Psoas muscle (tissue), 8 donors: ENCODE measurements at regions of chr2 and their contacts with region 1.

Region 1: DNA sequence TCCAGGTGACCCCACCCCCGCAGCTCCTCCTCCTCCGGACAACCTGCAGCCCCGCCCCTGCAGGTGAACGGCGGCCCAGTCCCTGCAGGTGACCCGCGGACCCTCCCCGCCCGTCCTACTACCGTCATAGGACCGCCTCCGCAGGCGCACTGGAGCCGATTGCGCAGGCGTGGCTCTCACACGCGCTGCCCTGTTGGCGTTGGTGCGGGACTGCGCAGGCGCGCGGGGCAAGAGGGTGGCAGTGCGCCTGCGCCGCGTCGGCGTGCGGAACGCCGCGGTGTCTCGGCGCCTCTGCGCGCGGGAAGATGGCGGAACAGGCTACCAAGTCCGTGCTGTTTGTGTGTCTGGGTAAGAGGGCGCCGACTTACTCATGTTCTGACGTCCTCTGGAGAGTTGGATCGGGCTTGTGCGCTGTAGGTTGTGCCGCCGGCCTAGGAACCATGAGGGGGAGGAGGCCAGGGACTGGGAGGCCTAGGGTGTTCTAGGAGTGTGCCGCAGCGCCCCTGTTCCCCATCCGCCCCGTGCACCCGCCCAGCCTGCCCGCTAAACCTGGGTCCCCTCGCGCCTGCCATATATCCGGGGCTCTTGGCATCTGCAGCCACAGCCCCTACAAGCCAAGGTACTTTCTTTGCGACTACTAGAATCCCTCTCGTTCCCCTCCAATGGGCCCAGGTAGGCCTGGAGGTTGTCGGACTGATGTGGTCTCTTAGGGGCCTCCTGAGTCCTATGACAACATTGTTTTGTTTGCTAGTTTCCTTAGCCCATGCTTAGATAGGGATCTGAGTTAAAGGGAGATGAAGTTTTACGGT is at the start of gene ACP1:
- DNase-seq: peak; percentile 94 to 96
- ATAC-seq: peak; percentile 97 to 99 (median 98)
- H3K4me3 ChIP-seq: peak within 1 kb of the TSS; percentile 91
- H3K27ac ChIP-seq: peak within 1 kb of the TSS; percentile 77
- H3K4me1 ChIP-seq: peaks cover 23% of the 10 kb centered on the region
- H3K27me3 ChIP-seq: no peaks in the 10 kb centered on the region
- CTCF ChIP-seq: no peak
- total RNA-seq, gene ACP1: 55.8 to 73.6 (median 66.5) TPM

Region 2: GRCh38 chr2:677056-677965 is 412.4 kb after region 1 on chr2 and contains the start of gene TMEM18:
- intact Hi-C with region 1: loop called in 1 of 2 experiments (anchors 10 kb)
- DNase-seq: peak in 1 of 2 donors; percentile 90
- ATAC-seq: peak; percentile 89 to 93 (median 92)
- H3K4me3 ChIP-seq: peak within 1 kb of the TSS; percentile 95
- H3K27ac ChIP-seq: peak within 1 kb of the TSS; percentile 97
- H3K4me1 ChIP-seq: peaks cover 15% of the 10 kb centered on the region
- H3K27me3 ChIP-seq: no peaks in the 10 kb centered on the region
- CTCF ChIP-seq: no peak
- total RNA-seq, gene TMEM18: 13.3 to 22.6 (median 16.0) TPM